ENCODE measurements at regions of chr5 and their contacts with region 1.

Region 1: DNA sequence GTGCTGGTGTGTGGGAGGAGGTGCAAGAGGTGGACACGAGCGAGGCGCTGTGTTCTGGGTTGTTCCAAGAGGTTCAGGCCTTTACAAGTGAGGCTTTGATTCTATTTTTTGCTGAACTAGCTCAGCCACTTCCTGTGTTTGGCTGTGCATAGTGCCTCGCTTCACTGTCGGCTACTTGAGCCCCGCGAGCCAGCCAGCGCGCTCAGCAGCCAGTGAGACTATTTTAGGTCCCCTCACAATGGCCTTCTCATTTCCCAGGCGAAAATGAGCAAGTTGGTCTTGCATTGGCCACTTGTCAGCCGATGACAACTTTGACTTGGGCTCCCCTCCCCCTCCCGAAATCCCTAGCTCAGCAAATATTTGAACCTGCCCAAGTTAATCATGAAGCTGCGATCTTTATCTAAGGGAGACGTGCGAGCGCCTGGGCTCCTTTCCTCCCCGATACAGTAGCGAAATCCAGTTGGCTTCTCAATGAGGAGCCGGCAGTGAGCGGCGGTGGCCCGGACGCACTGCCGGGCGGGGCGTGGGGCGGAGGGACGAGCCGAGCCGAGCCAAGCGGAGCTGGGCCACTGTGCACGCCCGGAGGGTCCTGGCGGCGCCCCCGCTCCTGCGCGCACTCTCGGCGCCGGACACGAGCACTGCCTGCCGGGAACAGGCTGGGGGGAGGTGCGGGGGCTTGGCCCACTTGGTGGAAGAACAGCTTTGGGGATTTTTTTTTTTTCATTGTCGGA is 72.6 kb downstream of the PIK3R1 start:
- DNase-seq: no peak
- H3K4me3 ChIP-seq: peak overlapping the region; percentile 60
- CTCF ChIP-seq: no peak

Region 2: DNA sequence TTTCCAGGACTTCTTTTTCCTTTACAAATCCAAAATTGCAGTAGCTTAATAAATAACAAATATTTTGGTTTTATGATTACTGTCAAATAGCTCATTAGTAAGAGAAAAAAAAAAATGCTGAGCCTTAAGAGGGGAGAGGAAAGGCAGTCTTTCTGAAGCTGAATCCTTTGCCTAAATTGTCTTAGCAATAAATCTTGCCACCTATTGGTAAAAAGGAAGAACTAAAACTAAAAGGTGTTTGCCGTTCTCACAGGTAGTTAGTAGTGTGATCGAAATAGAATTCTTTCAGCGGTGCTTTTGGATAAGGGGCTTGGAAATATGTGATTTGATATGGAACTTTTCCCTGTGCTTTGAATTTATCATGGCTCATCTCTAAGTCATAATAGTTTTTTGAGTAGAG is 41.3 kb before region 1 on chr5:
- CTCF ChIA-PET with region 1: no interaction called
- POLR2A ChIA-PET with region 1: no interaction called
- DNase-seq: no peak
- H3K4me3 ChIP-seq: no peak overlapping the region
- CTCF ChIP-seq: no peak

Region 3: DNA sequence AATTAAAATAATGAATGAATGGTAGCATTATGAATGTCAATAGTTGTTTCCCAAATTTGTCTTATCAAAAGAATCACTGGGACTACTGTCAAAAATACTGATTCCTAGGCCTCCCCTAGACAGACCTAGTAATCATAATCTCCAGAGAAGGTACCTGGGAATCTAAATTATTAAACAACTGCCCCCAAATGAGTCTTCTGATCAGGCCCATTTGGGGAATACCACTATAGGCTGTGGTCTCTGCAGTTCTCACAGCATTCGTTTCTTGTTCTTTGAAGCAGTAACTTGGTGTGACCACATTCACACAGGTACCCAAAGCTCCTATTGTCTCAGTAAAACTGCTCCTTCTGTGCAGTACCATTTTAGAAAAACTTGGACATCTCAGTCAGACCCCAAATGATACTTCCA is 158.3 kb after region 1 on chr5:
- CTCF ChIA-PET with region 1: interaction called, 16 read pairs
- POLR2A ChIA-PET with region 1: no interaction called
- DNase-seq: no peak
- H3K4me3 ChIP-seq: no peak overlapping the region
- CTCF ChIP-seq: no peak

Region 4: GRCh38 chr5:68478301-68479095 is 190.4 kb after region 1 on chr5:
- CTCF ChIA-PET with region 1: interaction called, 20 read pairs
- POLR2A ChIA-PET with region 1: no interaction called
- DNase-seq: peak; percentile 75
- H3K4me3 ChIP-seq: no peak overlapping the region
- CTCF ChIP-seq: no peak

Region 5: GRCh38 chr5:68551436-68551835 is 263.3 kb after region 1 on chr5:
- CTCF ChIA-PET with region 1: interaction called, 10 read pairs
- POLR2A ChIA-PET with region 1: no interaction called
- DNase-seq: no peak
- H3K4me3 ChIP-seq: no peak overlapping the region
- CTCF ChIP-seq: no peak

Region 6: GRCh38 chr5:68962757-68963484 is 674.8 kb after region 1 on chr5:
- CTCF ChIA-PET with region 1: interaction called, 38 read pairs
- POLR2A ChIA-PET with region 1: no interaction called
- DNase-seq: no peak
- H3K4me3 ChIP-seq: no peak overlapping the region
- CTCF ChIP-seq: peak; percentile 82

Region 7: GRCh38 chr5:69042915-69043658 is 754.9 kb after region 1 on chr5:
- CTCF ChIA-PET with region 1: interaction called, 24 read pairs
- POLR2A ChIA-PET with region 1: no interaction called
- DNase-seq: peak; percentile 59
- H3K4me3 ChIP-seq: no peak overlapping the region; the same call in 1 of the 2 replicates
- CTCF ChIP-seq: peak; percentile 57